Calu3 (cell line): ENCODE measurements at regions of chr3 and their contacts with region 1.

Region 1: DNA sequence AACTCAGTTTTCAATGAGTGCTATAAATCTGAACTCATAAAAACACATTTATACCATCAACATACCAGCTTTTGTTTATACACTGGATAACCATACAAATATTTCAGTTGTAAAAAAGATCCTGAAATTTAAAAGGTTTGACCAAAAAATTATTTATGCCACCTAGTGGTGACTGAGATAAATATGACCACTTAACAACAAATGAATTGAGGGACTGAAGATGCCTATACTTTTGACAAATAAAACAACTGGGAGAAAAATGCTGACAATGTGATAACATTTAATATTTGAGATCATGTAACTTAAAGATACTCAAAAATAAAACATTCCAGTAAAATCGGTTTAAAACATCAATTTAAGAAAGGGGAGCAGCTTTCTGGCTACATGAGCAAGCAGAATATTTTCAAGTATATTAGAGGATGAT is 30.4 kb downstream of the ATG3 start:
- DNase-seq: no peak
- H3K4me3 Mint-ChIP-seq: no peak overlapping the region
- H3K27ac Mint-ChIP-seq: no peak overlapping the region
- H3K4me1 Mint-ChIP-seq: peaks cover 8% of the 10 kb centered on the region
- H3K27me3 Mint-ChIP-seq: no peaks in the 10 kb centered on the region
- CTCF ChIP-seq: peak; percentile 11

Region 2: GRCh38 chr3:111700054-111700453 is 831.3 kb before region 1 on chr3:
- CTCF ChIA-PET with region 1: no interaction called
- intact Hi-C with region 1: no loop called
- DNase-seq: no peak
- H3K4me3 Mint-ChIP-seq: no peak overlapping the region
- H3K27ac Mint-ChIP-seq: no peak overlapping the region
- H3K4me1 Mint-ChIP-seq: no peaks in the 10 kb centered on the region
- H3K27me3 Mint-ChIP-seq: no peaks in the 10 kb centered on the region
- CTCF ChIP-seq: no peak

Region 3: DNA sequence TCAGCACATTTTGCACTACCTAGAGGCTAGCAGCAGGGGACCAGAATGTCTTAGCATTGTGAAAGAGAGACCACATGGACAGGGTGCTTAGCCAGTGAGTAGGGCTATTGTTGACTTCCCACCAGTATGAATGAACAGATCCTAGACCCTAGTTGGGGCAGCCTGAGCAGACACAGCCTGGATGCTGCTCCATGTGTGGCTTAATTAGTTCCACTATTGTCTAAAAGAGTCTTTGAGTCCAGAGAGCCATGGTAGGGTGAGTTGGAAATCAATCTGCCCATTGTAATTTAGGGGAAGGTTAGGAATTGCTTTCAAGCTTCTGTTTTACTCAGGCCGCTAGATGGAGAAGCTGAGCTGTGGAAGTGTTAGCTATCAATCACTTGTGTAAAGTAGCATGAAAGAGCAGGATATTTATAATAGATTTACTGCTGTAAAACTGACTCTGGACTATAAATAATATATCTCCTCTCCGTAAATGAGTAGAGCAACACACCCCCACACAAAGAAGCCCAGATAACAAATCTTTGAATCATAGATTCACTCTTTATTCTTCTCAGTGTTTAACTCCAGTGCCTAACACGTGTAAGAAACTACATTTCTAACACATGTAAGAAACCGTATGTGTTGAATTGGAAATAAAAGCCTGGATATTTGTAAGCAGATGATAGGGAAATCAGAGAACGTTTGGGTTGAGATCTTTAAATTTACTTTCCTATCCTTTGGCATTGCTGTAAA is 394.2 kb before region 1 on chr3:
- CTCF ChIA-PET with region 1: no interaction called
- intact Hi-C with region 1: loop called (anchors 1 kb)
- DNase-seq: peak; percentile 26
- H3K4me3 Mint-ChIP-seq: no peak overlapping the region
- H3K27ac Mint-ChIP-seq: no peak overlapping the region
- H3K4me1 Mint-ChIP-seq: peaks cover 10% of the 10 kb centered on the region
- H3K27me3 Mint-ChIP-seq: no peaks in the 10 kb centered on the region
- CTCF ChIP-seq: peak; percentile 26

Region 4: GRCh38 chr3:112550859-112551258 is 19.5 kb after region 1 on chr3:
- CTCF ChIA-PET with region 1: no interaction called
- intact Hi-C with region 1: no loop called
- DNase-seq: no peak
- H3K4me3 Mint-ChIP-seq: no peak overlapping the region
- H3K27ac Mint-ChIP-seq: no peak overlapping the region
- H3K4me1 Mint-ChIP-seq: peaks cover 8% of the 10 kb centered on the region
- H3K27me3 Mint-ChIP-seq: no peaks in the 10 kb centered on the region
- CTCF ChIP-seq: no peak